ENCODE measurements at regions of chr12 and their contacts with region 1.

Region 1: DNA sequence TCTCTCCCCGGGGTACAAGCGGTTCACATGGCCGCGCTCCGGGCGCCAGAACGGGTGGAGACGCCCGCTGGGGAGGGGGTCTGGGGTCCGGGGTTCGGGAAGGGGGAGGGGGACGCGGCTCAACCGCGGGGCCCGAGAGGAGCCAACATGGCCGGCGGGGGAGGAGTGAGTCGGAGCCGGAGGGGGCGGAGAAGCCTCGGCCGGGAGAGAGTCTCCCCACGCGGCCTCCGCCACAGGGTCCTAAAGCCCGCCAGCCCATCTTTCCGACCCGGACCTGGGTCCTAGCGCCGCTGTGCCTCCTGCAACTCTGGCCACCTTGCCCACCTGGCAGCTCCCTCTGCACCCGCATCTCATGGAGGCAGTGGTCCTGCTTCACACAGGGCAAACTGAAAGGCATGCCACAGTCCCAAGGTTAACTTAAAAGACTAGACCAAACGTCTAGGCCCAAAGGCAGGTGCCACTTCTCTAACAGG is at the start of gene BAZ2A:
- DNase-seq: peak; percentile 59 to 90 (median 80)
- ATAC-seq: peak; percentile 74 to 77 (median 76)
- H3K4me3 ChIP-seq: peak within 1 kb of the TSS; percentile 98 to 100
- H3K4me3 Mint-ChIP-seq: peak within 1 kb of the TSS; percentile 86 to 100 (median 93)
- H3K27ac ChIP-seq: peak within 1 kb of the TSS; percentile 89
- H3K27ac Mint-ChIP-seq: peak within 1 kb of the TSS; percentile 91 to 94
- H3K4me1 ChIP-seq: peaks cover 31 to 69% of the 10 kb centered on the region in 2 experiments
- H3K4me1 Mint-ChIP-seq: peaks cover 71 to 80% (median 72%) of the 10 kb centered on the region in 3 donors
- H3K27me3 ChIP-seq: no peaks in the 10 kb centered on the region
- H3K27me3 Mint-ChIP-seq: no peaks in the 10 kb centered on the region
- total RNA-seq, gene BAZ2A: 149 to 257 (median 172) TPM

Region 2: GRCh38 chr12:55899082-55899481 is 731.1 kb before region 1 on chr12:
- CTCF ChIA-PET with region 1: interaction called in 1 of 2 experiments, 10 read pairs
- POLR2A ChIA-PET with region 1: no interaction called
- DNase-seq: peak in 2 of 35 experiments; percentile 0 to 20
- ATAC-seq: peak in 2 of 4 experiments; percentile 37 to 55
- H3K4me3 ChIP-seq: no peak overlapping the region
- H3K4me3 Mint-ChIP-seq: no peak overlapping the region
- H3K27ac ChIP-seq: no peak overlapping the region
- H3K27ac Mint-ChIP-seq: peak overlapping the region; percentile 68 to 90
- H3K4me1 ChIP-seq: no peaks in the 10 kb centered on the region
- H3K4me1 Mint-ChIP-seq: peaks cover 10 to 14% (median 10%) of the 10 kb centered on the region in 3 donors
- H3K27me3 ChIP-seq: no peaks in the 10 kb centered on the region
- H3K27me3 Mint-ChIP-seq: no peaks in the 10 kb centered on the region

Region 3: DNA sequence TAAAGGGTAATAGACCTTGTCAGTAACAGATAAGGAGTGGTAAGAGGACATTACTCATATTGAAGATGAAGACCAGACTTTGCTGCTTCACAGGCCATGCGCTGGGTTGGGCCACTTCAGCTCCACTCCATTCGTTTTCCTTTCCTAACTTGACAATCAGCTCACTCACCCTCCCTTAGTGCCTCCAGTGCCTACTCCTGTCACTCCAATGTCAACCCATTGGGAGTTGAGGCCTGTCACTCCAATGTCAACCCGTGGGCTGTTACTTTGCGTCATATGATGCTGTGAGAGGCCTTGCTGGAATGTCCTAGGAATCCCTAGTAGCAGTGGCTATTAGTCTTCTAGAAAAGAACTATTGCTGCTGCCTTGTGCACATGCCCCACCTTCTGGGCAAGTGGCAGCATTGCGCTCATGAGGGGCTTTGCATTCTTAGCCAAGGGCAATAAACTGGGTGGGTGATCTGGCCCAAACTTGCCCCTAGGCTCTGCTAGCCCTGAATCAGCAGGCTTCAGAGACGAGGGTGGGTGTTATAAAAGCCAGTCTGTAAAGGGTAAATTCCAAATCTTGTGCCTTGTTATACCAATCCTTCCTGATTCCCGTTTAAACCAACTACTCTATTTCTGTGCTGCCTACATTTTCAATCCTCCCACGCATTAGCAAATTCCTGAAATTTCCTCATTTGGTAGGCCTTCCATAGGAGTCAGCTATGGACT is 36.1 kb before region 1 on chr12:
- CTCF ChIA-PET with region 1: interaction called, 4 to 6 read pairs
- POLR2A ChIA-PET with region 1: interaction called, 3 to 15 read pairs
- DNase-seq: peak; percentile 17 to 73 (median 52)
- ATAC-seq: peak; percentile 56 to 66 (median 62)
- H3K4me3 ChIP-seq: no peak overlapping the region
- H3K4me3 Mint-ChIP-seq: no peak overlapping the region
- H3K27ac ChIP-seq: no peak overlapping the region
- H3K27ac Mint-ChIP-seq: no peak overlapping the region
- H3K4me1 ChIP-seq: no peaks in the 10 kb centered on the region
- H3K4me1 Mint-ChIP-seq: peaks cover 0 to 2% (median 0%) of the 10 kb centered on the region in 3 donors
- H3K27me3 ChIP-seq: no peaks in the 10 kb centered on the region
- H3K27me3 Mint-ChIP-seq: no peaks in the 10 kb centered on the region

Region 4: GRCh38 chr12:56816491-56816890 is 186.3 kb after region 1 on chr12:
- CTCF ChIA-PET with region 1: no interaction called
- POLR2A ChIA-PET with region 1: no interaction called
- DNase-seq: no peak
- ATAC-seq: no peak
- H3K4me3 ChIP-seq: no peak overlapping the region
- H3K4me3 Mint-ChIP-seq: no peak overlapping the region
- H3K27ac ChIP-seq: no peak overlapping the region
- H3K27ac Mint-ChIP-seq: no peak overlapping the region
- H3K4me1 ChIP-seq: no peaks in the 10 kb centered on the region
- H3K4me1 Mint-ChIP-seq: no peaks in the 10 kb centered on the region
- H3K27me3 ChIP-seq: peaks cover 0 to 5% of the 10 kb centered on the region in 2 experiments
- H3K27me3 Mint-ChIP-seq: peaks cover 0 to 4% of the 10 kb centered on the region in 2 donors